Psoas muscle (tissue), 8 donors: ENCODE measurements at regions of chr1 and their contacts with region 1.

Region 1: GRCh38 chr1:246566128-246566812 is at the starts of genes CNST and TFB2M:
- DNase-seq: peak; percentile 98 to 99
- ATAC-seq: peak; percentile 93 to 99 (median 98)
- H3K4me3 ChIP-seq: peak within 1 kb of the TSS; percentile 86
- H3K27ac ChIP-seq: peak within 1 kb of the TSS; percentile 93
- H3K4me1 ChIP-seq: peaks cover 55% of the 10 kb centered on the region
- H3K27me3 ChIP-seq: no peaks in the 10 kb centered on the region
- CTCF ChIP-seq: no peak
- total RNA-seq, gene CNST: 17.3 to 64.8 (median 30.9) TPM
- total RNA-seq, gene TFB2M: 12.8 to 19.3 (median 15.0) TPM

Region 2: GRCh38 chr1:246261639-246262038 is 304.6 kb before region 1 on chr1:
- intact Hi-C with region 1: no loop called
- DNase-seq: no peak
- ATAC-seq: no peak
- H3K4me3 ChIP-seq: no peak overlapping the region
- H3K27ac ChIP-seq: no peak overlapping the region
- H3K4me1 ChIP-seq: no peaks in the 10 kb centered on the region
- H3K27me3 ChIP-seq: no peaks in the 10 kb centered on the region
- CTCF ChIP-seq: no peak

Region 3: DNA sequence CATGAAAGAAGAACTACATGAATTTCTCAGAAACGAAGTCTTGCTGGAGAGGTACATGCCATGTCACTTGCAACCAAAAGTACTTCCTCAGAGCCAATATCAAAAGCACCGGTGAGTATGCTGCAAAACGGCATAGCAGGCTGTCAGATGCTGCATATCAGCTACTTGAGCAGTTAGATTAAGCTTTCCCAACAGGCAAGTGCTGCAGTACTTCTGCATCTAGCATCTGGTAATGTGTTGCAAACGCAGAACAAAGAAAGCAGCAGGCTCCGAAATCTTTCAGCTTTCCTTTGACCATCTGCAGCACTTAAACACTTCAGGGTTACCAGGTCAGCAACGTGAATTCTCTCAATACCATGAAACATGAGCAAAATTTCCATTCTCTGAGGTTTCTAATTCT is 282.3 kb before region 1 on chr1:
- intact Hi-C with region 1: no loop called
- DNase-seq: no peak
- ATAC-seq: no peak
- H3K4me3 ChIP-seq: no peak overlapping the region
- H3K27ac ChIP-seq: no peak overlapping the region
- H3K4me1 ChIP-seq: no peaks in the 10 kb centered on the region
- H3K27me3 ChIP-seq: no peaks in the 10 kb centered on the region
- CTCF ChIP-seq: no peak

Region 4: DNA sequence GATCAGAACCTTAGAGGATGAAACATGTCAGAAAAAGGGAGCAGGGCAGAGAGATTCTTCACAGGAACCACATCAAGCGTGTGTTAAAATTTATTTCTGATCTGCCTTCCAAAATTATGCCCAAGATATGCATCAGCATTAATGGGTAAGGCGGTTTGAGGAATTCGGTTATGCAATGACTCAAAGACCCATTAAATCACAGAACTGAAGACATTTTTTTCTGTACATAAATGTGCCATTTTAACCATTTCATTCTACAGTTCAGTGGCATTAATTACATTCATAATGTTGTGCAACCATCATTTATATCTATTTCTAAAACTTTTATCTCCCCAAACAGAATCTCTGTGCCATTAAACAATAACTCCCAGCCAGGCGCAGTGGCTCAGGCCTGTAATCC is 43.4 kb after region 1 on chr1:
- intact Hi-C with region 1: loop called in 1 of 2 experiments (anchors 5 kb)
- DNase-seq: no peak
- ATAC-seq: no peak
- H3K4me3 ChIP-seq: no peak overlapping the region
- H3K27ac ChIP-seq: peak overlapping the region; percentile 53
- H3K4me1 ChIP-seq: peaks cover 43% of the 10 kb centered on the region
- H3K27me3 ChIP-seq: no peaks in the 10 kb centered on the region
- CTCF ChIP-seq: no peak

Region 5: DNA sequence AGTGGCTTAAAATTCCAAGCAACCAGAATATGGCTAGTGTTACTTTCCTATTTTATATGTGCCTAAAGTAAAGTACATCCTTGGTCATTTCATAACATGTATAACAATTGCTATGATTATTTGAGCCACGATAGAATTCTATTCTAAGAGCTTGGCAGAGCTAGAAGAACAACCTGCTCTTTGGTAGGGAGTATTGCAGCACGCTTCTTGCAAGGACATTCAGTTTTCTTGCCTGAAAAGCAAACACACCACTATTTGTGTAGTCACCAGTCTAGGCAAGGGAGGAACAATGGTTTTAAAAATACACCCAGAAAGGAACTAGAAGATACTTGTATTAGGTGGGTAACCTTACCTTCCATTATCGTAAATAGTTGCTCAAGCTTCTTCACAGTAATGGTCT is 51.5 kb after region 1 on chr1:
- intact Hi-C with region 1: loop called (anchors 2 to 5 kb)
- DNase-seq: no peak
- ATAC-seq: peak; percentile 57 to 97 (median 94)
- H3K4me3 ChIP-seq: peak overlapping the region; percentile 35
- H3K27ac ChIP-seq: peak overlapping the region; percentile 70
- H3K4me1 ChIP-seq: peaks cover 28% of the 10 kb centered on the region
- H3K27me3 ChIP-seq: no peaks in the 10 kb centered on the region
- CTCF ChIP-seq: no peak

Region 6: GRCh38 chr1:246699095-246699735 is 132.9 kb after region 1 on chr1:
- intact Hi-C with region 1: loop called in 1 of 2 experiments (anchors 5 kb)
- DNase-seq: peak; percentile 82 to 93
- ATAC-seq: peak; percentile 98 to 100 (median 99)
- H3K4me3 ChIP-seq: peak overlapping the region; percentile 53
- H3K27ac ChIP-seq: peak overlapping the region; percentile 86
- H3K4me1 ChIP-seq: peaks cover 6% of the 10 kb centered on the region
- H3K27me3 ChIP-seq: no peaks in the 10 kb centered on the region
- CTCF ChIP-seq: peak; percentile 85

Region 7: GRCh38 chr1:246809473-246809872 is 243.2 kb after region 1 on chr1:
- intact Hi-C with region 1: no loop called
- DNase-seq: no peak
- ATAC-seq: peak in 2 of 4 donors; percentile 9 to 45
- H3K4me3 ChIP-seq: no peak overlapping the region
- H3K27ac ChIP-seq: no peak overlapping the region
- H3K4me1 ChIP-seq: no peaks in the 10 kb centered on the region
- H3K27me3 ChIP-seq: no peaks in the 10 kb centered on the region
- CTCF ChIP-seq: no peak